ENCODE measurements at regions of chr7 and their contacts with region 1.

Region 1: DNA sequence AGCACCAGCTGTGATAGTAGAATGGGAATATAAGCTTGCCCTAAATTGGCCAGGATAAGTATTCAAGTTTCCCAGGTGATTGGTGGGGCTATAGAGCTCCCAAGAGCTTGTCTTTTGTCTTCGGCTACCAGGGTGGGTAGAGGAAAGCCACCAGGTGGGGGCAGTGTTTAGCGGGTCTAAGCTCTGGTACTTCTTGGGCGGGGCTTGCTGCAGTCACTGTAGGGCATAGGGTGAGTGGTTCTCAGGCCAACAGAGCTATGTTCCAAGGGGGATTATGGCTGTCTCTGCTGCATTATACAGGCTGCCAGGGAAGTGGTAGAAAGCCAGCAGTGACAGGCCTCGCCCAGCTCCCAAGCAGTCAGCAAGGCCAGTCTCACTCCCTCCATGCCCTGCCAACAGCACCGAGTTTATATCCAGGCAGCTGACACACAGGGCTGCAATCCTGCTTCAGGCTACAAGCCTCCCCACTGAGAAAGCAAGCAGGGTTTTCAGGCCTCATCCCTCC is 110.7 kb downstream of the ZNF467 start:
- DNase-seq: peak; percentile 90
- H3K4me3 Mint-ChIP-seq: no peak overlapping the region
- H3K27ac Mint-ChIP-seq: no peak overlapping the region
- H3K4me1 Mint-ChIP-seq: no peaks in the 10 kb centered on the region
- H3K27me3 Mint-ChIP-seq: peaks cover 42% of the 10 kb centered on the region

Region 2: GRCh38 chr7:149742075-149742701 is 79.5 kb after region 1 on chr7:
- intact Hi-C with region 1: loop called (anchors 1 kb)
- DNase-seq: peak; percentile 89
- H3K4me3 Mint-ChIP-seq: peak overlapping the region; percentile 81
- H3K27ac Mint-ChIP-seq: no peak overlapping the region
- H3K4me1 Mint-ChIP-seq: peaks cover 10% of the 10 kb centered on the region
- H3K27me3 Mint-ChIP-seq: peaks cover 45% of the 10 kb centered on the region